ENCODE measurements at regions of chr7 and their contacts with region 1.

Region 1: GRCh38 chr7:157336383-157337315 is at the start of gene DNAJB6:
- DNase-seq: peak; percentile 96
- ATAC-seq: peak; percentile 74
- H3K4me3 Mint-ChIP-seq: peak within 1 kb of the TSS; percentile 97
- H3K27ac Mint-ChIP-seq: peak within 1 kb of the TSS; percentile 99
- H3K4me1 Mint-ChIP-seq: peaks cover 37% of the 10 kb centered on the region
- H3K27me3 Mint-ChIP-seq: peaks cover 23% of the 10 kb centered on the region
- total RNA-seq, gene DNAJB6: 69.3 to 74.9 TPM

Region 2: DNA sequence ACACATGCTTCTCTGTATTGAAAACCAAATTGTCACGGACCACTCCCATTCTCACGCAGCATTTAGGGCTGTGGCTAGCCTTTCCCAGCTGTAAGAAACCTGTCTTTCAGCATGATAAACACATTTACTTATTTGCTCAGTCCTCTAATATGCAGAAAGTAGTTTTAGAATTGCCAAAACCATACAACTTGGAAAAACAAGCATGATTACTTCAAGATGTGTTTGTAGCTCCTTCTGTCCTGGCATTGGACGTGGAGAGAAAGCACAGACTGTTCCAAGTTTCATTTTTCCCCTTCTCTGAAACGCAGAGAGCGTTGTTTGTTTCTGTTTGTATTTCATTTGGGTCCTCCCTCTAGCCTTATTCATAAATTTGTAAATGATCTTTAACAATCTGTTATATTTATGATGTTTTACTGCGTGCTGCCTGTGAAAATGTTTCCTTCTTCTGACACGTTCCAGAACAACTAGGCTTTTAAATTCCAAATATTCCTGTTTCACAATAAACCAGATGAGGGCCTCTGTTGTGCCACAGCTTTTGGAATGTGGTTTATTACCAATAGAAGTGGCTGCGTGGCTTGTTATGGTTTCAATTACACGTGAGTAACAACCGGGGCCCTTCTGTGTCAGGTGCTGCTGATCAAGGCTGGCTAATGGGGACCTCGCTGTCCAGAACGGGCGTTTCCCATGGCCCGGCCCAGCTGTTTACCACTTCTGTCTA is 352.3 kb before region 1 on chr7:
- CTCF ChIA-PET with region 1: no interaction called
- POLR2A ChIA-PET with region 1: no interaction called
- DNase-seq: no peak
- ATAC-seq: no peak
- H3K4me3 Mint-ChIP-seq: no peak overlapping the region
- H3K27ac Mint-ChIP-seq: no peak overlapping the region
- H3K4me1 Mint-ChIP-seq: no peaks in the 10 kb centered on the region
- H3K27me3 Mint-ChIP-seq: no peaks in the 10 kb centered on the region

Region 3: GRCh38 chr7:157220916-157221569 is 115.6 kb before region 1 on chr7:
- CTCF ChIA-PET with region 1: no interaction called
- POLR2A ChIA-PET with region 1: no interaction called
- DNase-seq: no peak
- ATAC-seq: no peak
- H3K4me3 Mint-ChIP-seq: no peak overlapping the region
- H3K27ac Mint-ChIP-seq: no peak overlapping the region
- H3K4me1 Mint-ChIP-seq: no peaks in the 10 kb centered on the region
- H3K27me3 Mint-ChIP-seq: no peaks in the 10 kb centered on the region

Region 4: DNA sequence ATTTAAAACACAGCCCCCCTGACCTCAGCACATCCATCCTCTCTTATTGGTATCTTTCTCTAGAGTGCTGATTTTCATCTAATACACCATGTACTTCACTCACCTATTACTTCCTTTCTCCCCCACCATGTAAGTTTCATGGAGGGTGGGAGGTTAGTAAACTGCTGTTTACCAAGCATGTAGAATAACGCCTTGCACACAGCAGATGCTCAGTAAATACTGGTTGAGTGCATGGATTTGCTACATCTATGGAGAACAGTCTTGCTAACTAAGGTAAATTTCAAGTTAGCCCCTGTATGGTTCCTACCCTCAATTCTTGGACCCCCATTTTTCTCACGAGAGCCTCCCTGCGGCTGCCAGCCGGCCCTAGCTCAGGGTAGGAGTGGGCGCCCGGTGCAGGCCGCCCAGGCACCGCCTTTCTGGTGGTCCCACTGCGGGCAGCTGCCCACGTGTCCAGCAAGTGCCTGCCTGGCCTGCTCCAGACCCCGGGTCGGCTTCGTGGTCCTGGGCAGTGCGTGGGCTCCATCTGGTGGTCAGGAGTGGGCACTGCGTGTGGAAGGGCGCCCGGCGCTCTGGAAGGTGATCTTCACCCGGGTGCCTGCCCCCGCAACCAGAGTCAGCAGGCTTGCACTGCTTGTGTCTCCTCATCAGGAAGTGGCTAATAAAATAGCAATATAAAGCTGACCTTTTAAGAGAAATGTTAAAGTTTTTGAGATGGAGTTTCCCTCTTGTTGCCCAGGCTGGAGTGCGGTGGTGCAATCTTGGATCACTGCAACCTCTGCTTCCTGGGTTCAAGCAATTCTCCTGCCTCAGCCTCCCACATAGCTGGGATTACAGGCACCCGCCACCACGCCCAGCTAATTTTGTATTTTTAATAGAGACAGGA is 63.2 kb before region 1 on chr7:
- CTCF ChIA-PET with region 1: interaction called, 26 read pairs
- POLR2A ChIA-PET with region 1: interaction called, 6 read pairs
- DNase-seq: peak; percentile 69
- ATAC-seq: peak; percentile 56
- H3K4me3 Mint-ChIP-seq: no peak overlapping the region
- H3K27ac Mint-ChIP-seq: no peak overlapping the region
- H3K4me1 Mint-ChIP-seq: peaks cover 23% of the 10 kb centered on the region
- H3K27me3 Mint-ChIP-seq: peaks cover 2% of the 10 kb centered on the region

Region 5: GRCh38 chr7:157301610-157302120 is 35.0 kb before region 1 on chr7:
- CTCF ChIA-PET with region 1: interaction called, 7 read pairs
- POLR2A ChIA-PET with region 1: interaction called, 30 read pairs
- DNase-seq: no peak
- ATAC-seq: no peak
- H3K4me3 Mint-ChIP-seq: peak overlapping the region; percentile 63
- H3K27ac Mint-ChIP-seq: peak overlapping the region; percentile 92
- H3K4me1 Mint-ChIP-seq: peaks cover 40% of the 10 kb centered on the region
- H3K27me3 Mint-ChIP-seq: peaks cover 6% of the 10 kb centered on the region

Region 6: GRCh38 chr7:157386979-157387800 is 50.5 kb after region 1 on chr7:
- CTCF ChIA-PET with region 1: interaction called, 11 read pairs
- POLR2A ChIA-PET with region 1: interaction called, 3 read pairs
- DNase-seq: peak; percentile 93
- ATAC-seq: peak; percentile 88
- H3K4me3 Mint-ChIP-seq: no peak overlapping the region
- H3K27ac Mint-ChIP-seq: peak overlapping the region; percentile 28
- H3K4me1 Mint-ChIP-seq: peaks cover 50% of the 10 kb centered on the region
- H3K27me3 Mint-ChIP-seq: no peaks in the 10 kb centered on the region

Region 7: DNA sequence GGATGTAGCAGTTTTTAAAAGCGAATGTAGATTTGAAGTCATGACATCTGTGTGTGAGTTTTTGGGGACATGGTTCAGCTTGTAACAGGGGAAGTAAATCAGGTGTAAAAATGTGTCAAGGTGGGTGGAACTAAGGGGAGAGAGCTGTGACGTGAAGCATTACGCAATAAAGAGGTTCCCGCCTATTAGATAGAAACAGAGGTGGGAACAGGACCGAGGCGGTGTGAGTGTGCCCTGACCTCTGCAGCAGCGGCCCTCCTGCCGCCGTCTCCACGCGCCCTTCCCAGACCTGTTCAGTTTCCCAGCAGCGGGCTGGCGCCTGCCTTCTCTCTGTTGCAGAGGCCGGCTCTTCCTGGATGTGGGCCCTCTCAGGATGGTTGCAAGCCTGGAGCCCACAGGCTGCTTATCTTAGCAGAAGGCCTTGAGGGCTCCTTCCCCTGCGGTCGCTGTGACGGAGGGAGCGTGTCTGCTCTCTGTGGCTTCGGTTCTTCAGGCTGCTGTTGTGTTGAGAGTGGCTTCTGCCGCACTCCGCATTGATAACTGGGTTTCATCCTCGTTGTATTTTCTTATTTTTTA is 65.0 kb after region 1 on chr7:
- CTCF ChIA-PET with region 1: no interaction called
- POLR2A ChIA-PET with region 1: no interaction called
- DNase-seq: no peak
- ATAC-seq: no peak
- H3K4me3 Mint-ChIP-seq: no peak overlapping the region
- H3K27ac Mint-ChIP-seq: peak overlapping the region; percentile 4
- H3K4me1 Mint-ChIP-seq: peaks cover 28% of the 10 kb centered on the region
- H3K27me3 Mint-ChIP-seq: no peaks in the 10 kb centered on the region

Region 8: GRCh38 chr7:157457441-157458253 is 121.0 kb after region 1 on chr7:
- CTCF ChIA-PET with region 1: no interaction called
- POLR2A ChIA-PET with region 1: no interaction called
- DNase-seq: peak; percentile 16
- ATAC-seq: no peak
- H3K4me3 Mint-ChIP-seq: no peak overlapping the region
- H3K27ac Mint-ChIP-seq: no peak overlapping the region
- H3K4me1 Mint-ChIP-seq: peaks cover 6% of the 10 kb centered on the region
- H3K27me3 Mint-ChIP-seq: peaks cover 22% of the 10 kb centered on the region

Measured in activated CD8-positive, alpha-beta T cell treated with anti-CD3 and anti-CD28 coated beads, Interleukin-2, amount 10 ng/mL, durations not matched to agents 7 days and 5 days (primary cell).